ENCODE measurements at regions of chr7 and their contacts with region 1.

Region 1: GRCh38 chr7:3892157-3892556 is 591.1 kb downstream of the SDK1 start:
- DNase-seq: peak; percentile 81
- H3K4me3 ChIP-seq: no peak overlapping the region
- H3K27ac ChIP-seq: no peak overlapping the region
- H3K4me1 ChIP-seq: peaks cover 0 to 5% (median 0%) of the 10 kb centered on the region in 4 donors
- H3K27me3 ChIP-seq: no peaks in the 10 kb centered on the region
- CTCF ChIP-seq: no peak
- EP300 ChIP-seq: no peak
- POLR2A ChIP-seq: no peak

Region 2: GRCh38 chr7:2864999-2865670 is 1027.0 kb before region 1 on chr7:
- intact Hi-C with region 1: loop called (anchors 5 kb)
- DNase-seq: no peak
- H3K4me3 ChIP-seq: no peak overlapping the region
- H3K27ac ChIP-seq: peak overlapping the region in 1 of 4 donors; percentile 80
- H3K4me1 ChIP-seq: peaks cover 19 to 34% (median 30%) of the 10 kb centered on the region in 4 donors
- H3K27me3 ChIP-seq: peaks cover 0 to 4% (median 0%) of the 10 kb centered on the region in 4 donors
- CTCF ChIP-seq: peak; percentile 79 to 95 (median 83)
- EP300 ChIP-seq: no peak
- POLR2A ChIP-seq: no peak

Region 3: DNA sequence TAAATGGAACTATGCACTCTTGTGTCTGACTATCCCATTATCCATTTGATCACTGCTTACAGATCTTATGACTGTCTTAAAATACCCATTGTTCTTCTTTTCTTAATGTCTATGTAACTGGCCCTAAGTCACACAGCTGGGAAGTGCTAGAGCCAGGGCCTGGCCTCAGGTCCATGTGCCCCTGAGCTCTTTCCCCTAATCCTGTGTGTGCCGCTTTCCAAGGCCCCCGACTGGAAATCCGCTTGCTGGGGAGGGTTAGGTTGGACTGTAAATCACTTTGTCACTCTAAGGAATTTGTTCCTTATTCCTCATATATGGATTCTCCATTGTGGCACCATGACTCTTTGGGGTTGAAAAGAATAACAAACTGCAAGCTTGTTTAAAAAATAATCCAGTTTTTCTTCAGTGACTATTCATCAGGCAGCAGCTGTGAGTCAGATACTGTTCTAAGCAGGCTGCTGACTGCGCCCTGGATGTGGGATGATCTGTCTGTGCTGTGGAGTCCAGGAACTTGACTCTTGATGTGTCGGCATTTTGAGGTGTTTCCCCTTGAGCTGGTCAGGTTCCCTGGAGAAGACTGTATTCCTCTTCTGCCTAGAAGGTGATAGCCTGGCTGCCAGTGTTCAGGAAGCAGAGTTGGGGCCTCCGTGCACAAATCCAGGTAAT is 354.8 kb before region 1 on chr7:
- intact Hi-C with region 1: no loop called
- DNase-seq: peak; percentile 72
- H3K4me3 ChIP-seq: no peak overlapping the region
- H3K27ac ChIP-seq: no peak overlapping the region
- H3K4me1 ChIP-seq: no peaks in the 10 kb centered on the region
- H3K27me3 ChIP-seq: no peaks in the 10 kb centered on the region
- CTCF ChIP-seq: no peak
- EP300 ChIP-seq: no peak
- POLR2A ChIP-seq: no peak

Measured in esophagus muscularis mucosa (tissue), 4 donors.